ENCODE measurements at regions of chr18 and their contacts with region 1.

Region 1: GRCh38 chr18:3995476-3996102 is 459.5 kb downstream of the DLGAP1 start:
- ATAC-seq: peak in 5 of 8 experiments; percentile 29 to 55 (median 43)
- H3K4me3 ChIP-seq: no peak overlapping the region
- H3K27ac ChIP-seq: no peak overlapping the region
- H3K4me1 ChIP-seq: peaks cover 10 to 11% of the 10 kb centered on the region in 2 donors

Region 2: GRCh38 chr18:3485153-3486149 is 510.1 kb before region 1 on chr18:
- in situ Hi-C with region 1: no loop called
- ATAC-seq: no peak
- H3K4me3 ChIP-seq: no peak overlapping the region
- H3K27ac ChIP-seq: no peak overlapping the region
- H3K4me1 ChIP-seq: no peaks in the 10 kb centered on the region

Region 3: GRCh38 chr18:3703732-3704176 is 291.8 kb before region 1 on chr18:
- in situ Hi-C with region 1: loop called in 1 of 9 experiments (anchors 25 kb)
- ATAC-seq: peak; percentile 72 to 91 (median 83)
- H3K4me3 ChIP-seq: no peak overlapping the region
- H3K27ac ChIP-seq: no peak overlapping the region
- H3K4me1 ChIP-seq: no peaks in the 10 kb centered on the region

Region 4: GRCh38 chr18:3794537-3795348 is 200.8 kb before region 1 on chr18:
- in situ Hi-C with region 1: loop called in 2 of 9 experiments (anchors 25 kb)
- ATAC-seq: peak in 3 of 8 experiments; percentile 97
- H3K4me3 ChIP-seq: no peak overlapping the region
- H3K27ac ChIP-seq: no peak overlapping the region
- H3K4me1 ChIP-seq: peaks cover 12 to 21% of the 10 kb centered on the region in 2 donors

Region 5: GRCh38 chr18:3869848-3870247 is 125.7 kb before region 1 on chr18:
- in situ Hi-C with region 1: loop called in 2 of 9 experiments (anchors 25 kb)
- ATAC-seq: peak in 4 of 8 experiments; percentile 52 to 88 (median 80)
- H3K4me3 ChIP-seq: no peak overlapping the region
- H3K27ac ChIP-seq: no peak overlapping the region
- H3K4me1 ChIP-seq: peaks cover 12 to 24% of the 10 kb centered on the region in 2 donors

Region 6: GRCh38 chr18:3885209-3885792 is 110.3 kb before region 1 on chr18:
- in situ Hi-C with region 1: loop called in 1 of 9 experiments (anchors 25 kb)
- ATAC-seq: peak in 2 of 8 experiments; percentile 29 to 57
- H3K4me3 ChIP-seq: no peak overlapping the region
- H3K27ac ChIP-seq: no peak overlapping the region
- H3K4me1 ChIP-seq: no peaks in the 10 kb centered on the region